ENCODE measurements at regions of chr2 and their contacts with region 1.

Region 1: DNA sequence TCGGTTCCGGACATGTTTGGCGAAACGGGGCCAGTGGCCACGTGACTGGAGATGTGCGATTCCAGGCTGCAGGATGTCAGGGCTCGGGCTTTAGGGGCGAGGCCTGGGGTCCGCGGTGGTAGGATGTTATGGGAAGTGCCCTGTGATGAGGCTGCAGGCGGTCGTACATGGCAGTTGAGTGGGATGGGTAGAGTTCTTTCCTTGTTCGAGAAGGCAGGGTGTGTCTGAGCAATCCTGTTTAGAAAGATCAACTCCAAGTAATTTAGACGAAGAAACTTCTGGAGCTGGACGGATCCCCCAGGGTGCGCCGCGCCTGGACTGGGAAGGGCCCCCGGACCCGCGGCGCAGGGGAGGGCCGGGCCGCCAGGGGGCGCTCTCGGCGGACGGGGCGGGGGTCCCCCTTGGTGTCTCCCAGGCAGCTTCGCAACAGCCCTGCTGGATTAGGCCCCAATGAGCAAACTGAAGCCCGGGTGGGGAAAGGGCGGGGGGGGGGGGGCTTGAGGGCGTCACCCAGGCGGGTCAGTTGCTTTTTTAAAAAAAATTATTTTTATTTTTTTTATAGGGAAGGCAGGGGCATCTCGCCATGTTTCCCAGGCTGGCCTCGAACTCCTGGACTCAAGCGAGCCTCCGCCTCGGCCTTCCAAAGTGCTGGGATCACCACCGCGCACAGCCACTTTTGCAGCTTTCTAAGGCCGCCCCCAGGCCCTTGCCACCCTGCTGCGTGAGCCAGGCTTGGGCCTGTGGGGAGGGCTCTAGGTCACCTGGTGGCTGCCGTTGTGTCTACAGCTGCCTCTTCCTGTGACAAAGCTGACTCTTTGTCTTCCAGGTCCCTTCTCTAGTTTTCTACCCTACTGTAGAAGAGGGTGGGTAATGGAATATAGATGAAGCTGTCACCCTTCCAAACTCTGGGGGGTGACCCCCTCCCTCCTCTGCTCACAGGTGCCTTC is 17.4 kb upstream of the SDC1 start:
- DNase-seq: peak; percentile 54
- H3K4me3 Mint-ChIP-seq: peak overlapping the region; percentile 41
- H3K27ac Mint-ChIP-seq: no peak overlapping the region
- H3K4me1 Mint-ChIP-seq: peaks cover 3% of the 10 kb centered on the region
- H3K27me3 Mint-ChIP-seq: peaks cover 7% of the 10 kb centered on the region

Region 2: DNA sequence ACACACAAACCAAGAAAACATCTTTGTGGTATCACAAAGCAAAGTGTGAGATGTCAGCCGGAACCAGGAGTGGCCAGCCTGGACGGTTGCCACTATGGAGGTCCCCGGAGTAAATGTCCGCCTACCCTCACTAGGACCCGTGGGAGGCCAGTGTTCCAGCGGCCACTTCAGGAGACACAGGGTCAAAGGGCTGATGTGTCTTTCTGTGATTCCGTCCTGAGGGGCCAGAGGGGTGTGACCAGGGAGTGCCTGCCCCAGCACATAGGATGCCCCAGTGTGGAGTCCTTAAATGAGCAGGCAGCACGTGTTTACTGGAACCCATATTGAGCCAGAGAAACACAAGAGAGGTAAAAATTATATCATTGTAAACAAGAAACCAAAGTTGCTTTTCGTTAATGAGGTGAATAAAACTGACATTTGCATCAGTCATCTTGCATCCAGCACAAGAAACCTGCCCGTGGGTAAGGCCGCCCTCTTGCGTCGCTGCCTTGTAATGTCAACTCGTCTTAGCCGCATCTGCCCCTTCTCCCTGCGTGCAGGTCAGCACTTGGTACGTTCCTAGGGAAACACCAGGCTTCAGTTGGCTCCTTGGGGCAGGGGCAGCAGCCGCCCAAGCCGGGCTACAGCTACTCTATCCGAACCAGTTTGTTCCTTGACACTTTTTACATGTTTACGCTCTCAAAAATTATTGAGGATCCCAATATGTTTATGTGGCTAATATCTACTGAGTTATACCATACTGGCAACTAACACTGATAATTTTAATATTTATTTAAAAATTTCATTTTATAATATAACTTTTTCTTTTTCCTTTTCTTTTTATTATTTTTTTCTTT is 144.2 kb before region 1 on chr2:
- CTCF ChIA-PET with region 1: no interaction called
- POLR2A ChIA-PET with region 1: no interaction called
- intact Hi-C with region 1: no loop called
- DNase-seq: peak; percentile 87
- H3K4me3 Mint-ChIP-seq: no peak overlapping the region
- H3K27ac Mint-ChIP-seq: no peak overlapping the region
- H3K4me1 Mint-ChIP-seq: peaks cover 2% of the 10 kb centered on the region
- H3K27me3 Mint-ChIP-seq: peaks cover 1% of the 10 kb centered on the region

Region 3: DNA sequence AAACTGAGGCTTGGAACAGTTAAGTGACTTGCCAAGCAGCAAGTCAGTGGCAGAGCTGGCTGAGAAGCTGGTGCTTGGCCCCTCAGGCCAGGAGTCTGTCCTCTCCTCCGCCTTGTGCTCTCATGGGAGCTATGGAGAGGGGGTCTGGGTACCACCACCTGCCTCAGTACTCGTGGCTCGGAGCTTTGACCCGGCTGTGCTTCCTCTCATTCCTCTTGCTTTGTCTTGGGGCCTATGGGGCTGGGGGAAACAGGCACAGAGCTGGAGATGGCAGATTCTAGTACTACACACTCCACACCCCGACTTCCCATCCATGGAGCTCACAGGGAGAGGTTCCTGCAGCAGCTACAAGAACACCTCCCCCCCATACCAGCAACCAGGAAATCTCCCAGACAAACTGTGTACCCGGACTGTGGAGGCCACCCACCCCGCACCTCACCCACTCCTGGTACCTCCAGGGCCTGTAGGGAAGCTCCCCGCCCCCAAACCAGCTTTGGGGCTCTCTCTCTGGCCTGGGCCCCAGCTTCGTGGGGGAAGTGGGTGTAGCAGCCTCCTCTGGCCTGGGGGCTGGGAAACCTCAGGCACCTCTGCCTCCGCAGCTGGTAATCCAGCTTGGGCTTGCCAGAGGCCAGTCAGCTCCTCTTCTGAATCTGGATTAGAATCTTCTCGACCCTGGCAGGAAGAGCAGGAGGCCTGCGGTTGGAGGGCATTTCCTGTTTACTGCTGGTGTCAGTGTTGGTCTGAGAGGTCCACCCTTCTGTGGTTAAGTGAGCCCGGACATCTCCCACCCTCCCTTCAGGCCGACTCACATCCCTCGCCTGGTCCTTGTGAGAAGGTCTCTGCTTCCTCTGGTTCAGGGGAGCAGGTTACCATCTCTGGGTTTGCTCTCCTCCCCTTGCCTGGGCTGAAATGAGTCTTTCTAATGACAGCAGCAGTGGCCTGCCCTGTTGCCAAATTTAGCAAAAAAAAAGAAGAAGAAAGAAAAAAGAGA is 182.3 kb after region 1 on chr2:
- CTCF ChIA-PET with region 1: no interaction called
- POLR2A ChIA-PET with region 1: no interaction called
- intact Hi-C with region 1: loop called (anchors 10 kb)
- DNase-seq: peak; percentile 48
- H3K4me3 Mint-ChIP-seq: no peak overlapping the region
- H3K27ac Mint-ChIP-seq: no peak overlapping the region
- H3K4me1 Mint-ChIP-seq: peaks cover 16% of the 10 kb centered on the region
- H3K27me3 Mint-ChIP-seq: no peaks in the 10 kb centered on the region